Heart right ventricle (tissue), 16 donors: ENCODE measurements at regions of chr13 and their contacts with region 1.

Region 1: DNA sequence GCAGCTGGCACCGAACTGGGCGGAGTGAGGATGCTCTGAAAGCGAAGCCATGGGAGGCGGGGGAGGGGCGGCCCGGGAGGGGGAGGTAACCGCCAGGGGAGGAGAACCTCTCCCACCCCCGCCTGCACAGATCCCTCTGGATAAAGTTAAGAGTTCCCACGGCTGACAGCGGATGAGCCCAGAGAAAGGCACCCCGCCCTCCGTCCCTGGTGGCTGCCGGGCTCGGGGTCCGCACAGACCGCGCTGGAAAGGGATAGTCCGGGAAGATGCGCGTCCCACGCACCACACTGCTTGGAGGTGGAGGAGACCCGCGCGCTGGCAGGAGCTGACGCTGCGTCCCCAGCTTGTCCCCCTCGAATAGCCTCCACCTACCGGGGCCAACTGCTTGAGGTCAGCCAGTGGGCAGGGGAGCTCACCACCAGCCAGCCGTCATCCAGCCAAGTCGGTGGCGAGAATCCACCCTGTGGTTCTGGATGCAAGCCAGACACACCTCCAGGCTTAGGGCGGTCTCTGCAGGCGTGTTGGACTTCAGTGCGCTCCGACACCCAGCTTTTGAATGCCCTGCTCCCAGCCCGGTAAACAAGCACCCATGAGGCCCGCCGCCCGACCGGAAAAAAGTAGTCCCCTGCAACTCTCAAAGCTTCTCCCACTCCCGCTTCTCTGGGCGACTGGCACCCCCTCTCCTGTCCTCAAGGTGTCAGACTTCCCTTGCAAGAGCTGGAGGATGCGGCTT is at the start of gene TRPC4:
- DNase-seq: peak; percentile 25 to 33
- ATAC-seq: peak; percentile 46 to 94 (median 86)
- H3K4me3 ChIP-seq: peak within 1 kb of the TSS; percentile 37 to 61 (median 56)
- H3K27ac ChIP-seq: peak within 1 kb of the TSS in 5 of 10 donors; percentile 13 to 46 (median 32)
- H3K4me1 ChIP-seq: peaks cover 0 to 29% (median 4%) of the 10 kb centered on the region in 9 donors
- H3K27me3 ChIP-seq: peaks cover 0 to 32% (median 24%) of the 10 kb centered on the region in 7 donors
- CTCF ChIP-seq: peak in 8 of 9 donors; percentile 15 to 66 (median 46)
- total RNA-seq, gene TRPC4: 0.33 to 3.9 (median 1.2) TPM in 9 of 10 donors, not detected in the other

Region 2: GRCh38 chr13:37914781-37915391 is 45.0 kb after region 1 on chr13:
- intact Hi-C with region 1: no loop called
- DNase-seq: no peak
- ATAC-seq: no peak
- H3K4me3 ChIP-seq: no peak overlapping the region
- H3K27ac ChIP-seq: no peak overlapping the region
- H3K4me1 ChIP-seq: peaks cover 0 to 17% (median 0%) of the 10 kb centered on the region in 9 donors
- H3K27me3 ChIP-seq: no peaks in the 10 kb centered on the region
- CTCF ChIP-seq: no peak

Region 3: DNA sequence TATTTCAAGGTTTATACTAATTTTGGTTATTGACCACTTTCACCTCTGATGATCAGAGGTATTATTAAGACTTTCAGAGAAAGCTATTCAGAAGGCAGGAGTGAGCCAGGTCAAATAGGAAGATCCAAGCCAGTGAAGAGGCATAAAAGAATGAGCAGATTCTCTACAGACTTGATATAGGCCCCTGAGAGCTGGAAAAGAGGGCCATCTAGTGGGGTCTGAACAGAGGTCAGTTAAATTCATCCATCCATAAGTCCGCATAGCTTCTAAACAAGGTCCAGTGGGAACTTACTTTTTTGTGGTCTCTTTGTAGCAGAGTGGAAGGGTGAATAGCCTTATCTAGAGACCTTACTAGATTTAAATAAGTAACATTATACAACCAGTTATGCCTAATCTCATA is 353.2 kb after region 1 on chr13:
- intact Hi-C with region 1: loop called in 1 of 10 experiments (anchors 10 kb)
- DNase-seq: no peak
- ATAC-seq: peak in 2 of 8 donors; percentile 33 to 42
- H3K4me3 ChIP-seq: no peak overlapping the region
- H3K27ac ChIP-seq: no peak overlapping the region
- H3K4me1 ChIP-seq: no peaks in the 10 kb centered on the region
- H3K27me3 ChIP-seq: no peaks in the 10 kb centered on the region
- CTCF ChIP-seq: peak in 4 of 9 donors; percentile 15 to 21 (median 17)

Region 4: DNA sequence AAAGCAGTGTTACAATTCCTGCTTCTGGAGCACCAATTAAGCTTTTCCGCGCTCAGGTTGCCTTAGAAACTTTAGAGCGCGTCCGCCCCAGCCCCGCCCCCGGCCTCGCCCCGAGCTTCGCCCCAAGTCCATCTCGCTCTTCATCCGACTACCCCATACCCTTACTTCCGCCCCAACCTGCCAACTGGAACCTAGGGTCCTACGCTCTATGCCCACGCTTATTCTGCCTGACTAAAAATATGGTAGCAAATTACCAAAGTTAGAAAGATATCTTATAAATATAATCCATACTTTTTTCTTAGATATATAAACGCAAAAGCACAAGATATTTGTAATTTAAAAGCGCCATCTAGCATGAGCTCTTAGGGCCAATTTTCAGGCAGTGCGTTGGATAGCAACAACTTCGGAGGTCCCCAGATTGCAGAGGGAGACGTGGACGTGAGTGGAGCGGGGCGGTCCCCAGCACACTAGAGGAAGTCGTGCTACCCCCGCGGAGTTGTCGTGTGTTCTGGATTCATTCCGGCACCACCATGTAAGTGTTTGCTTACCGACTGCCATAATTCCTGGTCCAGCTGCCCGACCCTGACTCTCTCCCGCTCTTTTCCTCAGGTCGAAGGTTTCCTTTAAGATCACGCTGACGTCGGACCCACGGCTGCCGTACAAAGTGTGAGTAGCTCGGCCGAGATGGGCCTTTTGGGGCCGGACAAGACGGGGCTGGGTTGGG is 479.6 kb after region 1 on chr13 and contains the start of gene UFM1:
- intact Hi-C with region 1: loop called in 2 of 10 experiments (anchors 5 to 10 kb)
- DNase-seq: peak; percentile 88 to 92
- ATAC-seq: peak; percentile 99 to 100 (median 99)
- H3K4me3 ChIP-seq: peak within 1 kb of the TSS; percentile 57 to 87 (median 80)
- H3K27ac ChIP-seq: peak within 1 kb of the TSS; percentile 79 to 94 (median 88)
- H3K4me1 ChIP-seq: peaks cover 0 to 43% (median 25%) of the 10 kb centered on the region in 9 donors
- H3K27me3 ChIP-seq: no peaks in the 10 kb centered on the region
- CTCF ChIP-seq: no peak
- total RNA-seq, gene UFM1: 23.6 to 39.0 (median 26.0) TPM

Region 5: DNA sequence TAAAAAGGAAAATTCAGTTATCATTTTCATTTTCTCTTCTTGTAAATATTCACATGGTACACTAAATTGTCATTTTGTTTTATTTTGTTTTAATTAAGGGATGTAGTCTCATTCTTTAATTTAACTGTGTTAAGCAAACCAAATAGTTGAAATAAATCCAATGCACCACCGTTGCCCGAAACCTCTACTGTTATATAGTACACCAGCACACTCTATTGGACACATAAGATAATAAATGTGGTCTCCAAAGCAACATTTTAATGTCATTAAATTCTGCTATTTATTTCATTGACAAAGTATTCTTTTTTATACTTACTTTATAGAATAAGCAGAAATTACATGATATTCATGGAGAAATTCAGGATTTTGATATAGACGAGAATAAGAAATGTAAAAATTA is 660.6 kb after region 1 on chr13:
- intact Hi-C with region 1: loop called in 2 of 10 experiments (anchors 5 kb)
- DNase-seq: no peak
- ATAC-seq: peak in 1 of 8 donors; percentile 58
- H3K4me3 ChIP-seq: no peak overlapping the region
- H3K27ac ChIP-seq: no peak overlapping the region
- H3K4me1 ChIP-seq: no peaks in the 10 kb centered on the region
- H3K27me3 ChIP-seq: peaks cover 0 to 11% (median 0%) of the 10 kb centered on the region in 7 donors
- CTCF ChIP-seq: peak in 7 of 9 donors; percentile 34 to 63 (median 46)